IMR-90 (cell line): ENCODE measurements at regions of chr15 and their contacts with region 1.

Region 1: GRCh38 chr15:35281515-35281914 is 196.4 kb upstream of the NANOGP8 start:
- DNase-seq: peak; percentile 70
- ATAC-seq: peak; percentile 73
- H3K4me3 ChIP-seq: no peak overlapping the region
- H3K27ac ChIP-seq: no peak overlapping the region
- H3K4me1 ChIP-seq: no peaks in the 10 kb centered on the region
- H3K27me3 ChIP-seq: no peaks in the 10 kb centered on the region
- CTCF ChIP-seq: no peak
- POLR2A ChIP-seq: no peak
- RAD21 ChIP-seq: no peak

Region 2: DNA sequence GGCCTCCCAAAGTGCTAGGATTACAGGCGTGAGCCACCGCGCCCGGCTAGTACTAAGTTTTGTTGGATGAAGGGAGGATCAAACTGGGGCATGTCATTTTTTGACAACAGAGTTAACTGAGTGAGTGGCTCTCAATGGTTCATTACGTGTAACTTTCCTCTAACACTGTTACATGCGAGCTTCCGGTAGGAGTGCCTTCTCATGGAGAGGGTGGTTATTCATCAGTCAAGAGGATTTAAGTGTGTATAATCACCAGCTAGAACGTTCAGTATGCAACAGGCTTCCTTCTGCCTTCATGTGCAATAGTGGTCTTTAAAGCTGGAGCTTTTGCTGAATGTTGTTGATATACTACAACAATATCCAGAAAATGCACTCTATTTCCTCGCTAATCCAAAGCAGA is 824.9 kb before region 1 on chr15:
- CTCF ChIA-PET with region 1: no interaction called
- POLR2A ChIA-PET with region 1: no interaction called
- dilution Hi-C with region 1: no loop called
- in situ Hi-C with region 1: no loop called
- intact Hi-C with region 1: no loop called
- DNase-seq: no peak
- ATAC-seq: no peak
- H3K4me3 ChIP-seq: no peak overlapping the region
- H3K27ac ChIP-seq: no peak overlapping the region
- H3K4me1 ChIP-seq: no peaks in the 10 kb centered on the region
- H3K27me3 ChIP-seq: no peaks in the 10 kb centered on the region
- CTCF ChIP-seq: no peak
- POLR2A ChIP-seq: no peak
- RAD21 ChIP-seq: no peak

Region 3: DNA sequence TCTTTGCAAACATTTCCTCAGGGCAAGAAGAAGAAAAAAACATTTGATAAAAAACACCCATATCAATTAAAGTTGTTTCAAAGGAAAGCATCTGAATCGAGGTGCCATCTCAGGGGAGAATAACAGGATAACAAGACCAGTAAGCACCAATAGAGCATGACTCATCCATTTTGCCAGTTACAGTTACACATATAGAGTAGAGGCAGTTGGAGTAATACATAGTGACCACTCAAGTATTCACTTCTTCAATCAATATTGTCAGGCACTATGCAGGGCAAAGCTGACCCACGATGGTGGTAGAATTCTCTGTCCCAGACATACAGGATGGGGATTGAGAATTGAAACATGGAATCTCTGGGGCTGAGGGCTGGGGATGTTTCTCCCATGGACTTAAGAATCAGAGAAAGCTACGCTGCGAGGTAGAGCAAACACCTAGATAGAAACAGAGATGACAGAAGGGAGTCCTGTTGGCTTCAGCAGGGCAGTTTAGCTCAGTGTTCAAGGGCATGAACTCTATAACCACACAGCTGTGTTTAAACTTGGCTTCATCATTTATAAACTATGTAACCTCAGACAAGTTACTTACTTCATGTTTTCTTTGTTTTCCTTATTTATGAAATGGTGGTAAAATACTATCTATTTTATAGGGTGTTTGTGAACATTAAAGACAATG is 10.0 kb before region 1 on chr15:
- CTCF ChIA-PET with region 1: no interaction called
- POLR2A ChIA-PET with region 1: no interaction called
- dilution Hi-C with region 1: no loop called
- in situ Hi-C with region 1: no loop called
- intact Hi-C with region 1: loop called (anchors 1 kb)
- DNase-seq: peak; percentile 68
- ATAC-seq: peak; percentile 94
- H3K4me3 ChIP-seq: no peak overlapping the region
- H3K27ac ChIP-seq: no peak overlapping the region
- H3K4me1 ChIP-seq: peaks cover 6% of the 10 kb centered on the region
- H3K27me3 ChIP-seq: no peaks in the 10 kb centered on the region
- CTCF ChIP-seq: no peak
- POLR2A ChIP-seq: no peak
- RAD21 ChIP-seq: no peak

Region 4: GRCh38 chr15:35383511-35383910 is 102.0 kb after region 1 on chr15:
- CTCF ChIA-PET with region 1: no interaction called
- POLR2A ChIA-PET with region 1: no interaction called
- dilution Hi-C with region 1: no loop called
- in situ Hi-C with region 1: no loop called
- intact Hi-C with region 1: no loop called
- DNase-seq: no peak
- ATAC-seq: no peak
- H3K4me3 ChIP-seq: no peak overlapping the region
- H3K27ac ChIP-seq: no peak overlapping the region
- H3K4me1 ChIP-seq: no peaks in the 10 kb centered on the region
- H3K27me3 ChIP-seq: no peaks in the 10 kb centered on the region
- CTCF ChIP-seq: no peak
- POLR2A ChIP-seq: no peak
- RAD21 ChIP-seq: no peak

Region 5: DNA sequence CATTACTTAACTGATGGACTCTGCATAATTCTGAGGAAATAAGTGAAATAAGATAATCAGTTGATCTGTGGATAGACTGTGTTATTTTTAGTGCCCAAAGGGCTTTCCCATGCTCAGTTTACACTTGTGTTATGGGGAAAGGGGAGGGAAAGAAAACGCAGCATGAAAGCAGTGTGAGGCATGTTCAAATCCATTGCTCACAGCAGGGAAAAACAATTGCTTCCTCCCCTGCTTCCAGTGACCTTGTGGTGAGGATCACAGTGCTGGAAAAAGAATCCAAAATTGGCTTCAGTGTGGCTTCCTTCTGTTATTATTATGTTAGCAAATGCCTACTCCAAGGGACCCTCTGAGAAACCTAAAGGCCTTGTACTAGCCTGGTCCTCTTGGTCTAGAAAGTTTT is 1012.8 kb after region 1 on chr15:
- CTCF ChIA-PET with region 1: no interaction called
- POLR2A ChIA-PET with region 1: no interaction called
- dilution Hi-C with region 1: no loop called
- in situ Hi-C with region 1: no loop called
- intact Hi-C with region 1: no loop called
- DNase-seq: peak; percentile 13
- ATAC-seq: no peak; the same call in 1 of the 2 replicates
- H3K4me3 ChIP-seq: no peak overlapping the region
- H3K27ac ChIP-seq: no peak overlapping the region
- H3K4me1 ChIP-seq: 0 out of 2 replicates have a peak, but pooled peaks cover 3% of the 10 kb centered on the region
- H3K27me3 ChIP-seq: no peaks in the 10 kb centered on the region
- CTCF ChIP-seq: no peak
- POLR2A ChIP-seq: no peak
- RAD21 ChIP-seq: no peak